ENCODE measurements at regions of chr3 and their contacts with region 1.

Region 1: DNA sequence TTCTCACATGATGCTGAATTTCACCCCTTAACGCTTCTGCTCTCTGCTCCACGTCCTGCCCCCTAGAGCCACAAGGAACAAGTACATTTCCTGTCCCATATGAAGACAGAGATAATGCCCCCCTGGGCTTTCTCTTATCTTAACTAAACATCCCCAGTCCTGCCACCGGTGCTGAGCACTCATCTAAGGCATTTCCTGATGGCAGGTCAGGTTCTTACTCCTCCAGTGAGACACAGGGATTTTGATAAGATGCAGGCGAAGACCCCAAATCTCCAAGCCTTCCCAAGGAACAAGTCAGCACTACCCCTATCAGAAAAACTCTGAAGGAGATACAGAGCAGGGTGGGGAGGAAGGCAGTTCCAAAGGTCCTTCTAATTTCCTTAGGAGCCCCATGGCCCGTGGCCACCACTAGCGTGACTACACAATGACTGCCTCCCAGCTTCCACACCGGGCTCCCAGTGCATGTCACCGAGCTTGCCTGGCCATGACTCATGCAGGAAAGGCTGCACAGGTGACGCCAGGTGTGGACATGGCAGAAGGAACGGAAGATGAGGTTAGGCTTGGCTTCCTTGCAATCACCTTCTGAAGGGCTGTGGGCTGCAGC is 152.9 kb downstream of the XXYLT1 start:
- DNase-seq: no peak

Region 2: DNA sequence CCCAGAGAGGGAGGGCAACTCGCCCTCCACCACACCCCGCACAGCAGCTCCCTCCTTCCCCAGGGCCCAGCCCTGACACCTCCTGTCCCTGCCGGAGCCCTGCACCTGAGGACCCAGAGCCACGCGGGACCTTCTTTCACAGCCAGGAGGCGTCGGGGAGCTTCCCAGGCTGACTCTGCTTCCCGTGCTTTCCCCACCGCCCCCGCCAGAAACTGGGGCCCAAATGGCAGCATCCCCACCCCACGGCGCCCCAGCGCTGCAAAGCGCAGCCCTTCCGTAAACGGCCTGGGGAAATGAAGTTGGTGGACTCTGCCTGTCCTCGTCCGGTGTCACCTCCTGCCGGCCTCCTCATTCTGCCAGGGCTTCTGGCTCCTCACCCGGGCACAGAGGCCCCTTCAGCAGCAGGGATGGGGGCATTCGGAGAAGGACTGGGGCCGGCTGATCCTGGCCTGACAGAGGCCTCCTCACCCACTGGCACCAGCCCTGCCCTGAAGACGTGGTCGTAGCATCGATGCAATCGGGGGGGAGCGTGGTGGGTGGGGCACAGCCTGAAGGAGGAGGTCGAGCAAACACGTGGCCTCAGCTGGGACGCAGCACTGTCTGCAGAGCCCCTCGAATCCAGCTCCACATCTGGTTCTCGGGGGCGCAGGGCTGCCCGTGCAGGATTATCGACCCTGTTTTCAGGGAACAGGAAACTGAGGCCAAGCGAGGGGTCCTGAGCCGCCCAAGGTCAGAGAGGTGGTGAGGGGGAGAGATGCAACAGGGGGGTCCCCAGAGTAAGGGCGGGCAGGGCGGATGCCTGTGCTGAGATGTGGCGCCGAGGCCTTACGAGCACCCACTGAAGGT is 82.5 kb before region 1 on chr3:
- intact Hi-C with region 1: no loop called
- DNase-seq: peak in 1 of 42 donors; percentile 20

Region 3: DNA sequence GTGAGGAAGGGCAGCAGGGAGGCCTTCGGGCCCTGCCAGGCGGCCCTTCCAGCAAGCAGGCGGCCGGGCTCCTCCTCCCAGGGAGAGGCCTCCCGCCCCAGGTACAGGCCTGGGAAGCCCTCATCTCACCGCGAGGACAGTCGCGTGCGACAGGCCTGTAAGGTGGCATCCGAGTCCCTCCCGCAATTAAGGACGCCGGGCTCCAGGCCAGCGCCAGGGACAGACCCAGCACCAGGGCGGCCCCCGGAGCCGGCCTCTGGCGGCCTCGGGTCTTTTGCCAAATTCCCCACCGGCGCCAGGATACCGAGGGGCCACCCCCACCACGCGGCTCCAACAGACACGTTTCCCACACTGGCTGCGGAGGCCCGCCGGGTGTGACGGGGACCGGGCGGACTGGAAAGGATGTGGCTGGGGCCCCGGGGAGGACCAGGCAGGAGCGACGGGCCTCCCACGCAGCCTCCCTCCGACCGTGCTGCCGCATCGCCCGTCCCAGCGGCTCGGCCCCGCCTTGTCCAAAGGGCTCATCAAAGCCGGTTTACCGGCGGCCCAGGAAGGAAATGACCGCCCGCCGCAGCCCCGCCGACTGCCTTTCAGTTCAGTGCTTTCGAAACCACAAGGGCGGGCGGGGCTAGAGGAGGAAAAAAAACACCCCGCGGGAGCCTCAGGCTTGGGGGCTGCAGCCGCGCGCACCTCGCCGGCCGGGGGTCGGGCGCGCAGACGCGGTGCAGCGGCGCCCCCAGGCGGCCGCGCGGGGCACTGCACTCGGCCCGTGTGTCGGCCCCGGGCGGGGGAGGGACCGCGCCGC is 141.6 kb after region 1 on chr3:
- intact Hi-C with region 1: loop called (anchors 10 kb)
- DNase-seq: peak; percentile 34 to 90 (median 77)

Measured in head of caudate nucleus (tissue), 42 donors.